Endothelial cell of umbilical vein (primary cell): ENCODE measurements at regions of chr18 and their contacts with region 1.

Region 1: DNA sequence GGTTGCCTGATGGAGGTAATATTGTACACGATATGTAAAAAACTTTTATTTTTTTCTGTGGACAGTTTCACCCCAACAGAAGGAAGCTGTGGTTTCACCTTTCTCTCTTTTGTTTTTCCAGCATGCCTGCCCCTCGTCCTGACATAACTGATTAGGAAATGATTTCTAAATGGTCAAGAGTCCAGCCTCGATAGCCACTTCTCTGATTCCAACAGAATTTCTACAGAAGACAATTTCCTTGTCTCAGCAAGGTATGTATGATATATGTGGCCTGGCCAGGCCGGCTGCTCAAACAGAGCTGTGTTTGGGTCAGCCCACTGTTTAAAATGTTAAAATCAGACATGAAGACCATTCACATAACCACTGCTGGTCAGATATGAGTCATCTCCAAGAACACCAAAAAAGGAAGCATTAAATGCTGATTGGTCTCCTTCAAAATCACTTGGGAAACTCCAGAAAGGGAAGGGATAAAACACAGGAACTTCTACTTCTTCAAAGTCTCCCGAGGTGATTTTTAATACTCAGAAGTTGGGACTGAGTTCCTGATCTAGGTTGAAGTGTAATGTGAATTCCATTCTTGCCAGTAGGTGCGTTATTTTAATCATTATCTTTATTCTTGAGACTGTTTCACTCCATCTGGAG is 22.3 kb downstream of the ATP8B1 start:
- DNase-seq: peak; percentile 94
- H3K4me3 ChIP-seq: peak overlapping the region in 1 of 3 experiments; percentile 41
- H3K27ac ChIP-seq: peak overlapping the region; percentile 98
- H3K4me1 ChIP-seq: peaks cover 88% of the 10 kb centered on the region
- H3K27me3 ChIP-seq: no peaks in the 10 kb centered on the region
- CTCF ChIP-seq: no peak
- POLR2A ChIP-seq: peak; percentile 69

Region 2: GRCh38 chr18:57666818-57667497 is 113.9 kb before region 1 on chr18:
- CTCF ChIA-PET with region 1: no interaction called
- POLR2A ChIA-PET with region 1: interaction called, 5 read pairs
- dilution Hi-C with region 1: no loop called
- intact Hi-C with region 1: loop called (anchors 5 kb)
- DNase-seq: no peak
- H3K4me3 ChIP-seq: no peak overlapping the region
- H3K27ac ChIP-seq: no peak overlapping the region
- H3K4me1 ChIP-seq: peaks cover 34% of the 10 kb centered on the region
- H3K27me3 ChIP-seq: no peaks in the 10 kb centered on the region
- CTCF ChIP-seq: no peak
- POLR2A ChIP-seq: no peak

Region 3: DNA sequence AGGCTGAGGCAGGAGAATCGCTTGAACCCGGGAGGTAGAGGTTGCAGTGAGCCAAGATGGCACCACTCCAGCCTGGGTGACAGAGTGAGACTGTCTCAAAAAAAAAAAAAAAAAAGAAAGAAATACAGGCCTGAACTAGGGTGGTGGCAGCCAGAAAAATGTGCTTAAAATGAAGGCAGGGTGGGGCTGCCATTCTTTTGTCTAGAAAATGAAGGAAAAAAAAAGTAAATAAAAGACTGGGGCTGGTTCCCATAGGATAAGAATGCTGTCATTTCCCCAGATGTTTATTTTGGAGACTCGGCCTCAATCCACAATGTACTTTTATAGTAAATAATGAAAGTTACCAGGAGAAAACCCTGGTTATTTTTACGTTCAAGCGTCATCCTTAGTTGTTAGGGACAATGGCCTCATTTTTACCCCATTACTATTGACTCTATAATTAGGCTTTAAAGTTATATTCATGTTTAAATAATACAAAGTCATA is 36.6 kb before region 1 on chr18:
- CTCF ChIA-PET with region 1: interaction called, 5 read pairs
- POLR2A ChIA-PET with region 1: no interaction called
- dilution Hi-C with region 1: no loop called
- intact Hi-C with region 1: loop called (anchors 1 kb)
- DNase-seq: peak; percentile 93
- H3K4me3 ChIP-seq: peak overlapping the region in 1 of 3 experiments; percentile 5
- H3K27ac ChIP-seq: peak overlapping the region; percentile 83
- H3K4me1 ChIP-seq: peaks cover 36% of the 10 kb centered on the region
- H3K27me3 ChIP-seq: no peaks in the 10 kb centered on the region
- CTCF ChIP-seq: no peak
- POLR2A ChIP-seq: no peak

Region 4: GRCh38 chr18:57803103-57803969 is 22.5 kb after region 1 on chr18 and contains the start of gene ATP8B1:
- CTCF ChIA-PET with region 1: interaction called, 6 read pairs
- POLR2A ChIA-PET with region 1: interaction called, 6 read pairs
- dilution Hi-C with region 1: no loop called
- intact Hi-C with region 1: loop called (anchors 1 kb)
- DNase-seq: peak; percentile 86
- H3K4me3 ChIP-seq: peak within 1 kb of the TSS; percentile 89 to 98 (median 94)
- H3K27ac ChIP-seq: peak within 1 kb of the TSS; percentile 63
- H3K4me1 ChIP-seq: peaks cover 43% of the 10 kb centered on the region
- H3K27me3 ChIP-seq: no peaks in the 10 kb centered on the region
- CTCF ChIP-seq: no peak
- POLR2A ChIP-seq: peak; percentile 79
- total RNA-seq, gene ATP8B1: 86.5 and 100 TPM in 2 replicates

Region 5: GRCh38 chr18:57846258-57846657 is 65.4 kb after region 1 on chr18:
- CTCF ChIA-PET with region 1: no interaction called
- POLR2A ChIA-PET with region 1: no interaction called
- dilution Hi-C with region 1: no loop called
- intact Hi-C with region 1: loop called (anchors 2 kb)
- DNase-seq: peak; percentile 87
- H3K4me3 ChIP-seq: no peak overlapping the region
- H3K27ac ChIP-seq: peak overlapping the region; percentile 81
- H3K4me1 ChIP-seq: peaks cover 19% of the 10 kb centered on the region
- H3K27me3 ChIP-seq: no peaks in the 10 kb centered on the region
- CTCF ChIP-seq: no peak
- POLR2A ChIP-seq: no peak